Esophagus squamous epithelium (tissue), 5 donors: ENCODE measurements at regions of chr7 and their contacts with region 1.

Region 1: DNA sequence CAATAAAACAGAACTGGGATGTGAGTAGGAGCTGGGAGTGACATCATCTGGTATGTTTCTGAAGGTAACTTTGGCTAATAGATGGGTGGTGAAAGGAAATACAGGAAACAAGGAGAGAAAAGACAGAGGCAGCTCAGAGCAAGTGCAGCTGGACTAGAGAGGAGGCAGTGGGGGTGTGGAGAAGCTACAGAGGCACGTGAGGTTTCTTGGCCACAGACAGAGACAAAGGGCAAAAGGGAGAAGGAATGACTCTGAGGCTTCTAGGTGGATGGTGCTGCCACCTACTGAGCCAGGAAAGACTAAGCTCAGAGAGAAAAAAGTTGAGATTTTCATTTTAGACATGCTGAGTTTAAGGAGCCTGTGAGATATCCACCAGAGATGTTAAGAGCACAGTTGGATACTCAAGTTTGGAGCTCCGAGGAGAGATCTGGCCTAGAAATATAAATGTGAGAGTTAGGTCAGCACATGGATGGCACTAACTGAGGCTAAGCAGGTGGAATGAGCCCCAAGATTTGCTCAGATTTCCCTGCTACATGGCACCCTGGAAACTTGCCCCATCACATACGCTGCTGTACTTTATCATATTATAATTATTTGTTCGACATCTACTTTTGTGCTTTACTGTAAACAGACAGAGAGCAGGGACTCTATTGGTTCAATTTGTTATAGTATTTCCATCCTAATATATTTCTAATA is 293.0 kb upstream of the IMMP2L start:
- DNase-seq: no peak
- H3K4me3 ChIP-seq: no peak overlapping the region
- H3K27ac ChIP-seq: no peak overlapping the region
- H3K4me1 ChIP-seq: no peaks in the 10 kb centered on the region
- H3K27me3 ChIP-seq: no peaks in the 10 kb centered on the region
- CTCF ChIP-seq: peak in 4 of 6 experiments; percentile 31 to 66 (median 41)
- POLR2A ChIP-seq: no peak

Region 2: DNA sequence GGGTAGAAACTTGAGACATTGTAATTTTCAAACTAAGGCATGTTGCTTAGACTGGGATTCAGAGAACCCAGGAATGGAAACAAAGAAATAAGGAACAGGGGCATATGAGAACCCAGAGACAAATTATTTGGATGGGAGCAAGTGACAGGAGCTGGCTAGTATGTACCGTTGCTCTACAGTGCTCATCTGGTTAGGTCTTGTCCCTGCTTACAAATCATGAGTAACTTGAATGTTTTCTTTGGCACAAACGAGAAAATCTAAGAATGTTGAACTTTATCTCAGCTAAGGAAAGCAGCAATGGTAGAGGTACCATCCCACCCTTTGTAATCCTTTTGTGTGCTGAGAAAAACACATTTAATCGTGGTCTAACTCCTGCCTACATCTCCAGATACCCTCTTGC is 177.0 kb before region 1 on chr7:
- intact Hi-C with region 1: no loop called
- DNase-seq: no peak
- H3K4me3 ChIP-seq: no peak overlapping the region
- H3K27ac ChIP-seq: no peak overlapping the region
- H3K4me1 ChIP-seq: no peaks in the 10 kb centered on the region
- H3K27me3 ChIP-seq: no peaks in the 10 kb centered on the region
- CTCF ChIP-seq: no peak
- POLR2A ChIP-seq: no peak

Region 3: GRCh38 chr7:111756687-111757178 is 98.6 kb before region 1 on chr7:
- intact Hi-C with region 1: loop called (anchors 5 kb)
- DNase-seq: no peak
- H3K4me3 ChIP-seq: peak overlapping the region in 1 of 4 donors; percentile 9
- H3K27ac ChIP-seq: peak overlapping the region in 1 of 4 donors; percentile 54
- H3K4me1 ChIP-seq: no peaks in the 10 kb centered on the region
- H3K27me3 ChIP-seq: no peaks in the 10 kb centered on the region
- CTCF ChIP-seq: no peak
- POLR2A ChIP-seq: no peak

Region 4: DNA sequence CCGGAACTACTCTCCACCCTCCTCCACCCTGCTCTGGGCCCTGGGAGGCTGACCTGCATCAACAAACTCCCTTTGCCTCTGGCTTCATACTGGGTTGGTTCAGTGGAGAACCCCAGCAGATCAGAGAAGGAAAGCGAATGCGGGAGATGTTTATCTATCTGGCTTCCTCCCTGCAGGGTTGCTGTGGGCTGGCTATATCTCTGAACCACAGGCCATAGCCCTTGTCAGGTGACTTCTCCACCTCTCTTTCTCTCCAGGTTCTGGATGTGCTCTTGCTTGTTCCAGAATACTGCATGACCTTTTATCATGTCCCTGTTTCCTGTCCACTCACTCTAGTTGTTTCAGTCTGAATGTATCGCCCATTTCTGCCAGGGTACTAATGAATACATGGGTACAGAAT is 543.2 kb after region 1 on chr7:
- intact Hi-C with region 1: loop called (anchors 10 kb)
- DNase-seq: no peak
- H3K4me3 ChIP-seq: no peak overlapping the region
- H3K27ac ChIP-seq: no peak overlapping the region
- H3K4me1 ChIP-seq: peaks cover 0 to 6% (median 0%) of the 10 kb centered on the region in 3 donors
- H3K27me3 ChIP-seq: peaks cover 0 to 38% (median 0%) of the 10 kb centered on the region in 4 donors
- CTCF ChIP-seq: no peak
- POLR2A ChIP-seq: no peak